Heart left ventricle (tissue), 16 donors: ENCODE measurements at regions of chr18 and their contacts with region 1.

Region 1: DNA sequence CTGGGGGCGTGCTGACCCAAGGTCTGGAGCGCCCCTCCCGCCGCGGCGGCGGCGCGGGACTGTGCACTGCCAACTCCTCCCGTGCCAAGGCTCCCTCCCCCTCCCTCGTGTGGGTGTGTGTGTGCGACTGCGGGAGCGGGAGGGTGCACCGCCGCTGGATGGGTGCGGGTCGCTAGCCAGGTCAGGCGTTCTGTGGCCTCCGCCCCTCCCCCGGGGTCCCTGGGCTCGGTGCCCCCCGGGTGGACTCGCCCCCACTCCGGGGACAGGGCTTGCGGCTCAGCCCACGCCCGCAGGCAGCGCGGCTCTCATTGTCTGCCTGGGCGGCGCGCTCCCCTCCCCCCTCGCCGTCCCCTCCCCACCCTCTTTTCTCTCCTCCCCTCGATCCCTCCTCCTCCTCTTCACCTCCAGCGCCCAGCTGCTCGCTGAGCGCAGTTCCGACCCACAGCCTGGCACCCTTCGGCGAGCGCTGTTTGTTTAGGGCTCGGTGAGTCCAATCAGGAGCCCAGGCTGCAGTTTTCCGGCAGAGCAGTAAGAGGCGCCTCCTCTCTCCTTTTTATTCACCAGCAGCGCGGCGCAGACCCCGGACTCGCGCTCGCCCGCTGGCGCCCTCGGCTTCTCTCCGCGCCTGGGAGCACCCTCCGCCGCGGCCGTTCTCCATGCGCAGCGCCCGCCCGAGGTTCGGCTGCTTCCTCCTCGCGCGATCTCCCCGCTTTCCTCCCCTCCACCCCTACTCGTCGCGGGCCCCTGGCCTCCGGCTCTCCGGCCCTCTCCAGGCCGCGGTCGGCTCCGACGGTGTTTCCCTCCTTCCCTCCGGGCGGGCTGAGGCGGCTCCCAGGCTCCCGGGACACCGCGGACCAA is at the start of gene GATA6:
- DNase-seq: peak; percentile 90 to 96 (median 92)
- ATAC-seq: peak; percentile 74 to 85 (median 76)
- H3K4me3 ChIP-seq: peak within 1 kb of the TSS; percentile 66 to 99 (median 86)
- H3K27ac ChIP-seq: peak within 1 kb of the TSS; percentile 92 to 100 (median 98)
- H3K4me1 ChIP-seq: peaks cover 0 to 40% (median 8%) of the 10 kb centered on the region in 12 donors
- H3K27me3 ChIP-seq: peaks cover 0 to 75% (median 9%) of the 10 kb centered on the region in 9 donors
- CTCF ChIP-seq: peak in 9 of 12 donors; percentile 17 to 64 (median 47)
- POLR2A ChIP-seq: peak; percentile 50 to 91
- total RNA-seq, gene GATA6: 44.9 to 97.7 (median 76.3) TPM

Region 2: GRCh38 chr18:21914739-21915319 is 254.4 kb before region 1 on chr18:
- intact Hi-C with region 1: loop called in 4 of 10 experiments (anchors 5 to 10 kb)
- DNase-seq: peak in 2 of 5 donors; percentile 18 to 22
- ATAC-seq: peak in 3 of 4 donors; percentile 70 to 83 (median 76)
- H3K4me3 ChIP-seq: no peak overlapping the region
- H3K27ac ChIP-seq: no peak overlapping the region
- H3K4me1 ChIP-seq: no peaks in the 10 kb centered on the region
- H3K27me3 ChIP-seq: no peaks in the 10 kb centered on the region
- CTCF ChIP-seq: peak in 11 of 12 donors; percentile 25 to 63 (median 44)
- POLR2A ChIP-seq: no peak

Region 3: DNA sequence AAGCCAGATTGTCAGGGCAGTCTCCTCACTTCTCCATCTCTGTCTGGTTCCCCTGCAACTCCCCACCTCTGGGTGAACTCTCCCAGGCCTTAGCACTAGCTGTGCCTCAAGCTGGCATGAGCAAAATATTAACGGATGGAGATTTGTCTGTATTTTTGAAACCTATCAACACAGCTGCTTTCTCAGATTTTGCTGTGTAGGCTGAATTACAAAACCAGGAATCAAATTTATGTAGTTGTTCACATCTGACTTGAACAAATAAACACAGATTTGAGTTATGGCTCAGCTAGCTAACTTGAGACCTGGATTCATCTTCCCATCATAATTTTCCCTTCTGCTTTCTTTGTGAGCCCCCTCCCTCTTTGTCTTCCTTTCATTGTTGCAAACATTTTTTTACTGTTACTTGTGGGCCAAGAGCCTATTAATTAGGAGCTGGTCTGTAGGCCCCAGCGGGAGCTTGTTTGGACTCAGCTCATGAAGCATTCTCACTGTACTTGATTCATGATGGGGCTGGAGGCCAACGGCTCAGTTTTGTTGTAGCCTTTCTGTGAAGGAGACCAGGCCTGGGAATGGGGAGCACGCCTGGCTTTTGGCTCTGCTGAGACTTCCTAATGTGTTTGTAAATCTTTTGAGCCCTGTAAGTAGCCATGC is 163.9 kb before region 1 on chr18:
- intact Hi-C with region 1: loop called in 1 of 10 experiments (anchors 5 kb)
- DNase-seq: peak in 1 of 5 donors; percentile 49
- ATAC-seq: no peak
- H3K4me3 ChIP-seq: no peak overlapping the region
- H3K27ac ChIP-seq: peak overlapping the region in 1 of 12 donors; percentile 5
- H3K4me1 ChIP-seq: peaks cover 0 to 11% (median under 1%) of the 10 kb centered on the region in 12 donors
- H3K27me3 ChIP-seq: no peaks in the 10 kb centered on the region
- CTCF ChIP-seq: no peak
- POLR2A ChIP-seq: no peak

Region 4: GRCh38 chr18:22152134-22152533 is 17.1 kb before region 1 on chr18:
- intact Hi-C with region 1: no loop called
- DNase-seq: no peak
- ATAC-seq: peak in 1 of 4 donors; percentile 31
- H3K4me3 ChIP-seq: no peak overlapping the region
- H3K27ac ChIP-seq: no peak overlapping the region
- H3K4me1 ChIP-seq: no peaks in the 10 kb centered on the region
- H3K27me3 ChIP-seq: peaks cover 0 to 6% (median 0%) of the 10 kb centered on the region in 9 donors
- CTCF ChIP-seq: no peak
- POLR2A ChIP-seq: no peak

Region 5: DNA sequence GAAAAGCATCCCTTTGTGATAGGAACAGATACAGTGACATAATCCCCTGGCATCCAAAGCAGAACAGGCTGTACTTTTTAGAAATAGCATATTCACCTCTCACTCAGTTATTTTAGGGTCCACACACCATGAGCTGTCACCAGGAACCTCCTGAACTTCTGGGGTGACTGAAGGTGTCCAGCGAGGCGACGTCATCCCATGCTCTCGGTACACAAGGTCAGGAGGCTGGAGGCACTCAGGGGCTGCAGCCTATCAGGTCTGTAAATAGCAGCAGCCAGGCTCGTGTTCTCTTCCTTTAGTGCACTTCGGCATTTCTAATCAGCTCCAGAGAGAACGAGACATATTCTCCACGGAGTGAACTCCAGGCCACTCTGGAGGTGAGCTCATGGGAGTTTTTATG is 98.5 kb after region 1 on chr18:
- intact Hi-C with region 1: loop called in 5 of 10 experiments (anchors 2 to 5 kb)
- DNase-seq: peak; percentile 78 to 95 (median 86)
- ATAC-seq: peak; percentile 92 to 96 (median 92)
- H3K4me3 ChIP-seq: peak overlapping the region in 9 of 12 donors; percentile 34 to 61 (median 50)
- H3K27ac ChIP-seq: peak overlapping the region; percentile 77 to 99 (median 92)
- H3K4me1 ChIP-seq: peaks cover 0 to 33% (median 7%) of the 10 kb centered on the region in 12 donors
- H3K27me3 ChIP-seq: no peaks in the 10 kb centered on the region
- CTCF ChIP-seq: no peak
- POLR2A ChIP-seq: peak in 1 of 2 donors; percentile 31

Region 6: DNA sequence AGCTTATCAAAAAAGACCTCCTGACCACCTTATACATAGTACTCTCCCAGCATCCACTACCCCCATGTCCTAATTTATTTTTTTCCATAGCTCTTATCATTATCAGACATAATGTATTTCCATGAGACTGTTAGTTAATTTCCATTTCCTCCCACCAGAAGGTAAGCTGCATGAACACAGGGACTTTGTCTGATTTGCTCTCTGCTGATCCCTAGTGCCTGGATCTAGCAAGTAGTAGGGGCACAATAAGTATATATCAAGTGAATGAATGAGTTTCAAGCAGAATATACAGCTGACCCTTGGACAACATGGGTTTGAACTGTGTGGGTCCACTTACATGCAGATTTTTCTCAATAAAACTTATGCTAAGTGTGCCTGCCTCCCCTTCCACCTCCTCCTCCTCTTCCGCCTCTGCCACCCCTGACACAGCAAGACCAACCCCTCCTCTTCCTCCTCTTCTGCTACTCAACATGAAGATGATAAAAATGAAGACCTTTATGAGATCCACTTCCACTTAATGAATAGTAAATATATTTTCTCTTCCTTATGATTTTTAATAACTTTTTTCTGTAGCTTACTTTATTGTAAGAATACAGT is 194.7 kb after region 1 on chr18:
- intact Hi-C with region 1: loop called in 2 of 10 experiments (anchors 5 to 10 kb)
- DNase-seq: no peak
- ATAC-seq: peak; percentile 47 to 80 (median 73)
- H3K4me3 ChIP-seq: no peak overlapping the region
- H3K27ac ChIP-seq: no peak overlapping the region
- H3K4me1 ChIP-seq: peaks cover 0 to 9% (median 0%) of the 10 kb centered on the region in 12 donors
- H3K27me3 ChIP-seq: no peaks in the 10 kb centered on the region
- CTCF ChIP-seq: peak in 11 of 12 donors; percentile 12 to 59 (median 47)
- POLR2A ChIP-seq: no peak

Region 7: GRCh38 chr18:22609642-22610041 is 440.4 kb after region 1 on chr18:
- intact Hi-C with region 1: loop called in 1 of 10 experiments (anchors 5 kb)
- DNase-seq: peak; percentile 67 to 79 (median 76)
- ATAC-seq: peak; percentile 25 to 60 (median 49)
- H3K4me3 ChIP-seq: no peak overlapping the region
- H3K27ac ChIP-seq: peak overlapping the region; percentile 12 to 74 (median 50)
- H3K4me1 ChIP-seq: peaks cover 0 to 58% (median 30%) of the 10 kb centered on the region in 12 donors
- H3K27me3 ChIP-seq: no peaks in the 10 kb centered on the region
- CTCF ChIP-seq: no peak
- POLR2A ChIP-seq: no peak